Sigmoid colon (tissue), 7 donors: ENCODE measurements at regions of chr2 and their contacts with region 1.

Region 1: GRCh38 chr2:135052042-135052876 is at the start of gene RAB3GAP1:
- DNase-seq: peak; percentile 80
- H3K4me3 ChIP-seq: peak within 1 kb of the TSS; percentile 65 to 78 (median 76)
- H3K27ac ChIP-seq: peak within 1 kb of the TSS; percentile 90 to 95 (median 91)
- H3K4me1 ChIP-seq: peaks cover 0 to 40% (median 30%) of the 10 kb centered on the region in 4 donors
- H3K27me3 ChIP-seq: no peaks in the 10 kb centered on the region
- CTCF ChIP-seq: no peak
- EP300 ChIP-seq: no peak
- POLR2A ChIP-seq: peak in 1 of 2 donors; percentile 50
- total RNA-seq, gene RAB3GAP1: 54.5 to 70.2 (median 60.9) TPM

Region 2: DNA sequence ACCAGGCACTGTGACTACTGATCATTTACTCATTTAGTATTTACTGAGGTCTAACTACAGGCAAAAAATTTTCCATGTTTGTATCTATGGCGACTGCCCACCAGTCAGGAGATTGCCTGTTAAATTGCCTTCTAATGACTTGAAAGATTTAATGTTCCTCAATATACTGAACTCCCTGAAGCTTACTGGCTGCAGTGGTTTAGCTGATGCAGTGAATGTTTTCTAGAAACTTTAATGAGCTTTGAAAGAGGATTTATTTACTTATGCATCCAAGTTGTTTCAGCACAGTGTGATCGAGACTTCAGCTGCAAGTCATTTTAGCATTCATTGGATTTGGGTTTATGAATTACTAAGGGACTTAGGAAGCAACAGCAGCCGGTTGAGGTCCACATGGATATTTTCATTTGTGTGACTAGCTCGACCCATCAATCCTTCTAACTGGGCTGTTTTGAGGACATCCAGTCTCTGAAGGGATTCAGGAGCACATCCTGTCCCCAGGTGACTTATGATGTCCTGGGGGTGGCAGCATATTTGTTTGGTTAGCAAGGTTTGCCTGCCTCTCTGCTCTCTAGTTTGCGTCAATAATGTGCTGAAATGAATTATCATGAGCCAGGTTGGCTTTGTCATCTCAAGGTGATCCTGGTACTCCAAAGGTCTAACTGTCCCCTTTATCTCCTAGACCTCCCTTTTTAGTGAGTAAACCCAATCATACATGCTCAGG is 187.0 kb before region 1 on chr2:
- intact Hi-C with region 1: no loop called
- DNase-seq: no peak
- H3K4me3 ChIP-seq: no peak overlapping the region
- H3K27ac ChIP-seq: no peak overlapping the region
- H3K4me1 ChIP-seq: no peaks in the 10 kb centered on the region
- H3K27me3 ChIP-seq: no peaks in the 10 kb centered on the region
- CTCF ChIP-seq: no peak
- EP300 ChIP-seq: no peak
- POLR2A ChIP-seq: no peak

Region 3: GRCh38 chr2:134883552-134884293 is 168.5 kb before region 1 on chr2:
- intact Hi-C with region 1: no loop called
- DNase-seq: no peak
- H3K4me3 ChIP-seq: no peak overlapping the region
- H3K27ac ChIP-seq: no peak overlapping the region
- H3K4me1 ChIP-seq: no peaks in the 10 kb centered on the region
- H3K27me3 ChIP-seq: no peaks in the 10 kb centered on the region
- CTCF ChIP-seq: no peak
- EP300 ChIP-seq: no peak
- POLR2A ChIP-seq: no peak

Region 4: GRCh38 chr2:135531231-135532228 is 479.3 kb after region 1 on chr2 and contains the start of gene R3HDM1:
- intact Hi-C with region 1: loop called (anchors 5 kb)
- DNase-seq: peak; percentile 100
- H3K4me3 ChIP-seq: peak within 1 kb of the TSS; percentile 64 to 98 (median 88)
- H3K27ac ChIP-seq: peak within 1 kb of the TSS; percentile 90 to 93 (median 92)
- H3K4me1 ChIP-seq: peaks cover 0 to 25% (median 6%) of the 10 kb centered on the region in 4 donors
- H3K27me3 ChIP-seq: no peaks in the 10 kb centered on the region
- CTCF ChIP-seq: peak in 1 of 4 experiments; percentile 2
- EP300 ChIP-seq: no peak
- POLR2A ChIP-seq: peak in 1 of 2 donors; percentile 6
- total RNA-seq, gene R3HDM1: 12.0 to 34.6 (median 15.8) TPM

Region 5: DNA sequence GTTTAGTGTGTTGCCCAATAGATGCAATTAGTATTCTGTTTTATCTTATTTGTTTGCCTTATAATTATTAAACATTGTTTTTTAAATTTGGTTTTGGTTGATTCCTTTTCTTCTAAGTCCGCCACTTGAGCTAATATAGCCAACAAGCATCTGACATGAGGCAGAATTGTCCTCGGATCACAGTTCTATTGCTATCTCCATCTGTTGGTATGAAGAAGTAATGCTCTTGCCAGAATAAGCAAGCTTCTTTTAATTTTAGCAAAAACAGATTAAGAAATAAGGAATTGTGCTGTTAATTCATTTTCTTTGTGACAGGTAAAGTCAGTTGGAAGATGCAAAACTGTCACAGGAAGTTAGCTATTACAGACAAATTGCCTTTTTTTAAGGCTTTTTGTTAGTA is 533.3 kb after region 1 on chr2:
- intact Hi-C with region 1: no loop called
- DNase-seq: no peak
- H3K4me3 ChIP-seq: no peak overlapping the region
- H3K27ac ChIP-seq: no peak overlapping the region
- H3K4me1 ChIP-seq: peaks cover 0 to 8% (median 0%) of the 10 kb centered on the region in 4 donors
- H3K27me3 ChIP-seq: no peaks in the 10 kb centered on the region
- CTCF ChIP-seq: no peak
- EP300 ChIP-seq: no peak
- POLR2A ChIP-seq: no peak